ENCODE measurements at regions of chr2 and their contacts with region 1.

Region 1: GRCh38 chr2:71402417-71402816 is 50.9 kb upstream of the DYSF start:
- DNase-seq: no peak
- H3K4me3 ChIP-seq: no peak overlapping the region
- H3K27ac ChIP-seq: no peak overlapping the region
- H3K4me1 ChIP-seq: no peaks in the 10 kb centered on the region
- H3K27me3 ChIP-seq: no peaks in the 10 kb centered on the region
- CTCF ChIP-seq: no peak

Region 2: DNA sequence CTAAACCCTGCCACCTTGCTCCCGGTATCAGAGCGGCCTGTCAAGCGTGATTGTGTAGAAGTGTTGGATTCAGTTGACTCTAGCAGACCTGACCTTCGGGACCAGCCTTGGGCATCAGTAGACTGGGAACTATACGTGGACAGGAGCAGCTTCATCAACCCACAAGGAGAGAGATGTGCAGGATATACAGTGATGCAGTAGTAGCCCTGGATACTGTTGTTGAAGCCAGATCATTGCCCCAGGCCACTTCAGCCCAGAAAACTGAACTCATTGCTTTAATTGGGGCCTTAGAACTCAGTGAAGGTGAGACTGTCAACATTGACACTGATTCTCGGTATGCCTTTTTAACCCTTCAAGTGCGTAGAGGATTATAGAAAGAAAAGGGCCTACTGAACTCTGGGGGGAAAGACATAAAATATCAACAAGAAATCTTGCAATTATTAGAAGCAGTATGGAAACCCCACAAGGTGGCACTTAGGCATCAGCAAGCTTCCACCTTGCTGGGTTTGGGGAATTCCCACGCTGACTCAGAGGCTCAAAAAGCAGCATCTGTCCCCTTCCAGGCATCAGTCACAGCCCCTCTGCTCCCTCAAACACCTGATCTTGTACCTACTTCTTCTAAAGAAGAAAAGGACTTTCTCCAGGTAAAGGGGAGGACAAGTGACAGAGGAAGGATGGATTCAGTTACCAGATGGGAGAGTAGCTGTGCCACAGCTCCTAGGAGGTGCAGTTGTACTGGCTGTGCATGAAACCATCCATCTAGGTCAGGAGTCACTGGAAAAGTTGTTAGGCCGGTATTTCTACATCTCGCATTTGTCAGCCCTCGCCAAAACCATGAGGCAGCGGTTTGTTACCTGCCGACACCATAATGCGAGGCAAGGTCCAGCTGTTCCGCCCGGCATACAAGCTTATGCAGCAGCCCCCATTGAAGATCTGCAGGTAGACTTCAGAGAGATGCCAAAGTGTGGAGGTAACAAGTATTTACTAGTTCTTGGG is 352.8 kb before region 1 on chr2:
- CTCF ChIA-PET with region 1: no interaction called
- POLR2A ChIA-PET with region 1: no interaction called
- intact Hi-C with region 1: no loop called
- DNase-seq: no peak
- H3K4me3 ChIP-seq: no peak overlapping the region
- H3K27ac ChIP-seq: no peak overlapping the region
- H3K4me1 ChIP-seq: no peaks in the 10 kb centered on the region
- H3K27me3 ChIP-seq: no peaks in the 10 kb centered on the region
- CTCF ChIP-seq: no peak

Region 3: GRCh38 chr2:71243634-71244304 is 158.6 kb before region 1 on chr2:
- CTCF ChIA-PET with region 1: no interaction called
- POLR2A ChIA-PET with region 1: no interaction called
- intact Hi-C with region 1: no loop called
- DNase-seq: no peak
- H3K4me3 ChIP-seq: no peak overlapping the region
- H3K27ac ChIP-seq: no peak overlapping the region
- H3K4me1 ChIP-seq: no peaks in the 10 kb centered on the region
- H3K27me3 ChIP-seq: peaks cover 29% of the 10 kb centered on the region
- CTCF ChIP-seq: no peak

Region 4: GRCh38 chr2:71385012-71385411 is 17.4 kb before region 1 on chr2:
- CTCF ChIA-PET with region 1: no interaction called
- POLR2A ChIA-PET with region 1: no interaction called
- intact Hi-C with region 1: loop called (anchors 2 kb)
- DNase-seq: peak; percentile 18
- H3K4me3 ChIP-seq: no peak overlapping the region
- H3K27ac ChIP-seq: no peak overlapping the region
- H3K4me1 ChIP-seq: peaks cover 3% of the 10 kb centered on the region
- H3K27me3 ChIP-seq: no peaks in the 10 kb centered on the region
- CTCF ChIP-seq: no peak

Measured in A673 (cell line).